Caco-2 (cell line): ENCODE measurements at regions of chr9 and their contacts with region 1.

Region 1: DNA sequence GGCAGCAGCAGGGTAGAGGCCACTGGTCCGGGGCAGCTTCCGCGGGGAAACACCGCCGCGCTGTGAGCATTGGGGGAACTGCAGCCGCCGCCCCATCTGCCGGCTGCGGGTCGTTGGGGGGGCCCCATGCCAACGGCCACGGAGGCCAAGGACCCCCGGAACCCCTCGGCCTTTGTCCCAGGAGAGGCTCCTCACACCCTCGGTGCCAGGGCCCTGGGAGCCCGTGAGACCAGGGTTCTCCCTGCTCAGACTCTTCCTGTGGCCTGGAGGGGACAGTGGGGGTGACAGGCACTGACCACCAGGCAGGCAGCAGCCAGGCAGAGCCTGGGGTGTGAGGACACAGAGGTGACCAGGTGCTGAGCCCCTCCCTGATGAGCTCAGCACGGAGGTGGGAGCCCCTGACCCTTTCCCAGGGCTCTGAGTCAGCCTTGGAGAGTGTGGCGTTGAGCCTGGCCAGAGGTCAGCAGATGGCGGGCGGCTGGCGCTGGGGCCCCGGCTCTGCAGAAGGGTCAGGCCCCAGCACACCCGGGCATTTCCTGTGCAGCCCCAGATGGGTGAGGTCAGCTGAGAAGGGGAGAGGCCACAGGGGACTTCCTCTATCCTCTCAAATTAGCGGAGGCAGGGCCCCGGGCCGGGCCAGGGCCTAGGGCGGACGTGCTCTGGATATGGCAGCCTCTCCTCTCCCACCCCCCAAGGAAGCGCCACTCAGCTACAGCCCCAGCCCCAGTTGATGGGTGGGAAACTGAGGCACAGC is 17.9 kb upstream of the EGFL7 start:
- DNase-seq: peak; percentile 51 to 63
- H3K4me3 ChIP-seq: no peak overlapping the region
- H3K4me3 Mint-ChIP-seq: no peak overlapping the region
- H3K27ac Mint-ChIP-seq: no peak overlapping the region
- H3K4me1 ChIP-seq: peaks cover 13% of the 10 kb centered on the region
- H3K4me1 Mint-ChIP-seq: no peaks in the 10 kb centered on the region
- H3K27me3 ChIP-seq: no peaks in the 10 kb centered on the region
- H3K27me3 Mint-ChIP-seq: no peaks in the 10 kb centered on the region
- CTCF ChIP-seq: peak; percentile 44 to 50

Region 2: DNA sequence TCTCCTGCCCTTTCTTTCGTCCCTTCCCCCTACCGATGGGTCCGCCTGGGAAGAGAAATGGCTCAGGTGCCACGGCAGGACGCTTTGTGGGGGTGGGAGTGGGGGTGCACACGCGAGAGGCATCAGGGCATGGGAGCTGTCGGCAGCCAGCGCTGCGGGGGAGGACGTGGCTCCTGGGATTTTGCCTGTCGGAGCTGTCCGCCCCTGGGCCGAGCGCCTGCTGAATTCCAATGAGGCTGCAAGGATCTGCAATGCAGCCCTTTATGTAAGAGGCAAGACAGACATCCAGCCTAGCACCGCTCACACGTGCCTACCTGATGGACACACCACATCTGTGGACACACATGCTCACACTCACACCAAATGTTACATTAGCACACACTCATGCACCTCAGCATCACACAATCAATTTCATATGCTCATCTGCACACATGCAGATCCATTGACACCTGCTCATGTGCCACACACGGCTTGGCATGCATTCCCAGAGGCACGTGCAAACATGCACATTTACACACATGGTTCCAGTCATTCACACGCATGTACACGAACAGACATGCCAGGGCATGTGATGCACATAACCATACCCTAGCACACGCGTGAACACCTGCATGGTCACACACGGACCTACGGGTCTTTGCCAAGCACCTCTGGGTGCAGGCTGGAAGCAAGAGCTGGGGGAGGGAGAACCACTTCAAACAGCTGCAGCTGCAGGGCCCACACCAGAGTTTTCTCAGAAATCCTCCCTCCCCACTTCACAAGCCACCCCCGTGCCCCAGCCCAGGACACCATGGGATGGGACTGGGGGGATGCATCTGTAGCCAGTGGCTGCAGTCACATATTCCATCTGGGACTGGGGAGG is 495.6 kb after region 1 on chr9:
- CTCF ChIA-PET with region 1: no interaction called
- POLR2A ChIA-PET with region 1: no interaction called
- intact Hi-C with region 1: loop called (anchors 5 kb)
- DNase-seq: no peak
- H3K4me3 ChIP-seq: no peak overlapping the region
- H3K4me3 Mint-ChIP-seq: no peak overlapping the region
- H3K27ac Mint-ChIP-seq: no peak overlapping the region
- H3K4me1 ChIP-seq: peaks cover 10% of the 10 kb centered on the region; the same call in 1 of the 2 replicates
- H3K4me1 Mint-ChIP-seq: no peaks in the 10 kb centered on the region
- H3K27me3 ChIP-seq: no peaks in the 10 kb centered on the region
- H3K27me3 Mint-ChIP-seq: peaks cover 9% of the 10 kb centered on the region
- CTCF ChIP-seq: no peak